Testis (tissue), 5 donors: ENCODE measurements at regions of chr1 and their contacts with region 1.

Region 1: DNA sequence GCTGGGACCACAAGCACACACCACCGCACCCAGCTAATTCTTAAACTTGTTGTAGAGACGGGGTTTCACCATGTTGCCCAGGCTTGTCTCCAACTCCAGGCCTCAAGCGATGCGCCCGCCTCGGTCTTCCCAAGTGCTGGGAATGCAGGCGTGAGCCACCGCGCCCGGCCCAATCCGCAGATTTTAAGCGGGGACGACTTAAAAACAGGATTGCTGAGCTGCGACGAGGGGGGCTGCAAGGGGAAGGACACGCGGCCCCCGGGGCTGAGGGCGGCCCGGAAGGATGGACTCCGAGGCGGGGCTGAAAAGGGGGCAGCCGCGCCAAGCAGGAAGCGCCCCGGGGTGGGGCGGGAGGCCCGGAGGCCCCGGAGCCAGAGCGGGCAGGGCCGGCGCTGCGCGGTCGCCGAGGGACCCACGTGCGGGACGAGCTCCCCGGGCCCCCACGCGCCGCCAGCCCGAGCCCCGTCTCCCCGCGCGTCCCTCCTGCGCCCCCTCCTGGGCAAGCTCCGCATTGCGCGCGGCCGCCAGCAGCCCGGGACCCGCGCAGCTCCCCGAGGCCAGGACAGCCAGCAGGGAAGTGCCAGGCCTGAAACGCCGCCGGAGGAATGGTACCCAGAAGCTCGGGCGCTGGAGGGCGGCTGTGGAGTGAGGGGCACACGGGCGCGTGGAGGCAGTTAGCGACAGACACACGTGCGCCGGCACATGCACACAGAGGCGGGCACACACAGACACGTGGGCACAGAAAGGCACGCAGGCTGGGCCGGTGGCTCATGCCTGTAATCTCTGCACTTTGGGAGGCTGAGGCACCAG is 5.5 kb upstream of the PRKCZ start:
- DNase-seq: peak; percentile 77
- H3K4me3 ChIP-seq: peak overlapping the region; percentile 29 to 43
- H3K27ac ChIP-seq: no peak overlapping the region
- H3K4me1 ChIP-seq: peaks cover 7% of the 10 kb centered on the region
- H3K27me3 ChIP-seq: no peaks in the 10 kb centered on the region
- CTCF ChIP-seq: peak; percentile 90 to 97 (median 96)
- POLR2A ChIP-seq: no peak

Region 2: DNA sequence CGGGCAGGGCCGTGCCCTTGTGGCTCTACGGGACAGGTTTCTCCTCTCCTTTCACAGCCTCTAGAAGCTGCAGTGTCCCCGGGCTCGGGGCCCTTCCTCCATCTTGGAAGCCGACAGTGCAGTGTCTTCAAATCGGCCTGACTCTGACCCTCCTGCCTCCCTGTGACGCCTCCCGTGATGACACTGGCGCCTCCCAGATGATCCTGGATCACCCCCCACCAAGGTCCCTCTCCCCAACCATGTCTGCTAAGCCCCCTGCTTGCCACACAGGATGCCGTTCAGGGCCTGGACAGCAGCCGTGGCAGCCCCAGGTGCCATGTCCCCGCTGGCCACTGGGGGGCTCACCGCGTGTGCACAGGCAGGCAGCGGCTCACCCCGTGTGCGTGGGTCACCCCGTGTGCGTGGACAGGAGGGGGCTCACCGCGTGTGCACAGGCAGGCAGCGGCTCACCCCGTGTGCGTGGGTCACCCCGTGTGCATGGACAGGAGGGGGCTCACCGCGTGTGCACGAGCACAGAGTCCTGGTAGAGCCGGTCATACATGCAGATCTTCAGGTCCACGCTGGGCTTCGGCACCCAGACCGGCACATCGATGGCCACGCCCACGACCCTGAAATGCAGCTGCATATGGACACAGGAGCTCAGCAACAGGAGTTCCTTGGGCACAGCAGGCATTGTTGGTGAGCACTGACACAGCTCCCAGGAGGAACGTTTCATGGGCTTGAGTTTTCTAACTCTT is 100.7 kb before region 1 on chr1:
- intact Hi-C with region 1: loop called (anchors 5 kb)
- DNase-seq: peak; percentile 64
- H3K4me3 ChIP-seq: no peak overlapping the region
- H3K27ac ChIP-seq: no peak overlapping the region
- H3K4me1 ChIP-seq: peaks cover 17% of the 10 kb centered on the region
- H3K27me3 ChIP-seq: no peaks in the 10 kb centered on the region
- CTCF ChIP-seq: peak; percentile 67 to 96 (median 87)
- POLR2A ChIP-seq: no peak